ENCODE measurements at regions of chr22 and their contacts with region 1.

Region 1: DNA sequence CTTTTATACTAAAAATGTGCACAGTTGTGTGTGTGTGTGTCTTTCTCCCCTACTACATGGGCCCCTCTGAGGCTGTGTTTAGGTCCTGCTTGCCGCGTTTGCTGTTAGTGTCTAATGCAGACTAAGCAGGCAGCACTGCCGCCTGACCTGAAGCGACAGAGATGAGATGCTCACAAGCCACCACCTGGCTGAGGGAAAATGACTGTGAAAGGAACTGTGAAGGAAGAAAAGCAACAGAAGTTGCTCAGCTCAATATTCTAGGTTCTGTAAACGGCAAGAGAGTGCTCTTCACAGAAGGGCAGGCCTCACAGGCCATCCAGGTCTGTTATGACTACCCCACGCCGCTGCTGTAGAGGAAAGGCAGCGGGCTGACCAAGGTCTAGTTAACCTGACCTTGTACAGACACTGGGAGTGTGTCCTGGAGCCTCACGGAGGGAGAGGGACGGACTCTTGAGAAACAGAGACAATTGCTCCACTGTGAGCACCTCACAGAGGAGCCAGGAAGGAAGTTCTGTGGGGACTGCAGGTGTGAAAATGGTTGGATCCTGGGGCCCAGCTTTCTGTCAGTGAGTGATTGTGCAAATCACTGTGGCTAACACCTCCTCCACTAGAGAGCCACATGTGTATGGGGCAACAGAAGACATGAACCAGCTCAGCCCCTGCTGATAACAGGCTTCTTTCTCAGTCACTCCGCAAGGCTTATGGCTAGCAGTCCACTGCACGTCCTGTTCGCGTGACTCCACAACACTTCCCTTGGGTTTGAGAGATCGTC is 31.3 kb upstream of the YPEL1 start:
- DNase-seq: peak; percentile 12 to 84 (median 54)
- ATAC-seq: peak; percentile 68 to 84 (median 74)
- H3K4me3 ChIP-seq: peak overlapping the region in 1 of 2 donors; percentile 6
- H3K4me3 Mint-ChIP-seq: peak overlapping the region; percentile 37 to 65 (median 39)
- H3K27ac ChIP-seq: peak overlapping the region; percentile 72
- H3K27ac Mint-ChIP-seq: peak overlapping the region; percentile 84 to 95
- H3K4me1 ChIP-seq: peaks cover 6 to 70% of the 10 kb centered on the region in 2 experiments
- H3K4me1 Mint-ChIP-seq: peaks cover 48 to 70% (median 59%) of the 10 kb centered on the region in 3 donors
- H3K27me3 ChIP-seq: no peaks in the 10 kb centered on the region
- H3K27me3 Mint-ChIP-seq: no peaks in the 10 kb centered on the region

Region 2: GRCh38 chr22:20909543-20910303 is 857.2 kb before region 1 on chr22:
- CTCF ChIA-PET with region 1: no interaction called
- POLR2A ChIA-PET with region 1: interaction called in 1 of 2 experiments, 14 read pairs
- DNase-seq: no peak
- ATAC-seq: no peak
- H3K4me3 ChIP-seq: no peak overlapping the region
- H3K4me3 Mint-ChIP-seq: no peak overlapping the region
- H3K27ac ChIP-seq: no peak overlapping the region
- H3K27ac Mint-ChIP-seq: no peak overlapping the region
- H3K4me1 ChIP-seq: no peaks in the 10 kb centered on the region
- H3K4me1 Mint-ChIP-seq: no peaks in the 10 kb centered on the region
- H3K27me3 ChIP-seq: no peaks in the 10 kb centered on the region
- H3K27me3 Mint-ChIP-seq: no peaks in the 10 kb centered on the region

Region 3: GRCh38 chr22:21796231-21796630 is 29.4 kb after region 1 on chr22:
- CTCF ChIA-PET with region 1: no interaction called
- POLR2A ChIA-PET with region 1: no interaction called
- DNase-seq: no peak
- ATAC-seq: no peak
- H3K4me3 ChIP-seq: no peak overlapping the region
- H3K4me3 Mint-ChIP-seq: no peak overlapping the region
- H3K27ac ChIP-seq: no peak overlapping the region
- H3K27ac Mint-ChIP-seq: no peak overlapping the region
- H3K4me1 ChIP-seq: peaks cover 0 to 3% of the 10 kb centered on the region in 2 experiments
- H3K4me1 Mint-ChIP-seq: peaks cover 0 to 8% (median 8%) of the 10 kb centered on the region in 3 donors
- H3K27me3 ChIP-seq: no peaks in the 10 kb centered on the region
- H3K27me3 Mint-ChIP-seq: no peaks in the 10 kb centered on the region